ENCODE measurements at regions of chr11 and their contacts with region 1.

Region 1: DNA sequence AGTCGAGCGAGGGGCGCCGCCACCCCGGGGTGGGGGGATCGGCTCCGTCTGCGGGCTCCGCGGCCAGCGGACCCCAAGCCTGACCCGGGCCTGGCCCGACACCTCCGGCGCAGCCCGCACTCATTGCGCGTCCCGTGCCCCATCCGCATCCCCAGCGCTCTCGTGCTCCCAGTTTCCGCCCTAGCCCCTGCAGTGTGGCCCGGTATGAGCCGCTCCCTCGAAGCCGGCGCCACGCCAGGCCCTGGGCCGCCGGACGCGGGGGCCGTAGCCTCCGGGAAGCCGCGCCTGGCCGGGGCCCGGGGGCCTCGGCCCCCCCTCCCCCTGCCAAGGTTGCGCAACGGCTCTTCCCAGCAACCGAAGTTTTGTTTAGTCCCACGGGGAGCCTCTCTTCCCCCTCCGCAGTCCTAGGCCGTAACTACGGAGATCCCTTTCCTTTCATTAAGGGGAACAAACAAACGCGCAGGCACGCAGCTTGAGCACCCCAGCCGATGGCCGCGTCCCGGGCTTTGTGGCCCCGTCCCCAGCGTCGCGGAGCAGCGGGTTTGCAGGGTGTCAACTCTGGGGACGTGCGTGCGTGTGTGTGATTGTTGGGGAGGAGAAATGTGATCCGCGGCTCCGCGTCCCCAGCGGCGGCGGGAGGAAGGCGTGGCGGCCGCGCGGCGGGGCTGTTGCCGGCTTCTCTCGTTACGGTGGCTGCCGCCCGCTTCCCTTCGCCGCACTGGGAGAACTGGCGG is 883 bp downstream of the HIPK3 start:
- DNase-seq: peak; percentile 48 to 88 (median 73)
- ATAC-seq: peak; percentile 61
- H3K4me3 ChIP-seq: peak overlapping the region; percentile 72 to 98
- H3K4me3 Mint-ChIP-seq: peak overlapping the region; percentile 93
- H3K27ac ChIP-seq: peak overlapping the region; percentile 92 to 98
- H3K27ac Mint-ChIP-seq: peak overlapping the region; percentile 99
- H3K4me1 ChIP-seq: peaks cover 28% of the 10 kb centered on the region
- H3K4me1 Mint-ChIP-seq: peaks cover 46% of the 10 kb centered on the region
- H3K27me3 ChIP-seq: no peaks in the 10 kb centered on the region
- H3K27me3 Mint-ChIP-seq: no peaks in the 10 kb centered on the region
- CTCF ChIP-seq: peak; percentile 23

Region 2: GRCh38 chr11:32893343-32894148 is 364.5 kb before region 1 on chr11:
- CTCF ChIA-PET with region 1: no interaction called
- POLR2A ChIA-PET with region 1: no interaction called
- intact Hi-C with region 1: loop called (anchors 1 to 5 kb)
- DNase-seq: peak in 8 of 9 experiments; percentile 21 to 75 (median 54)
- ATAC-seq: peak; percentile 50
- H3K4me3 ChIP-seq: peak overlapping the region; percentile 79 to 87
- H3K4me3 Mint-ChIP-seq: peak overlapping the region; percentile 92
- H3K27ac ChIP-seq: peak overlapping the region; percentile 36 to 51
- H3K27ac Mint-ChIP-seq: peak overlapping the region; percentile 74
- H3K4me1 ChIP-seq: peaks cover 27% of the 10 kb centered on the region
- H3K4me1 Mint-ChIP-seq: peaks cover 33% of the 10 kb centered on the region
- H3K27me3 ChIP-seq: no peaks in the 10 kb centered on the region
- H3K27me3 Mint-ChIP-seq: no peaks in the 10 kb centered on the region
- CTCF ChIP-seq: peak; percentile 35

Region 3: DNA sequence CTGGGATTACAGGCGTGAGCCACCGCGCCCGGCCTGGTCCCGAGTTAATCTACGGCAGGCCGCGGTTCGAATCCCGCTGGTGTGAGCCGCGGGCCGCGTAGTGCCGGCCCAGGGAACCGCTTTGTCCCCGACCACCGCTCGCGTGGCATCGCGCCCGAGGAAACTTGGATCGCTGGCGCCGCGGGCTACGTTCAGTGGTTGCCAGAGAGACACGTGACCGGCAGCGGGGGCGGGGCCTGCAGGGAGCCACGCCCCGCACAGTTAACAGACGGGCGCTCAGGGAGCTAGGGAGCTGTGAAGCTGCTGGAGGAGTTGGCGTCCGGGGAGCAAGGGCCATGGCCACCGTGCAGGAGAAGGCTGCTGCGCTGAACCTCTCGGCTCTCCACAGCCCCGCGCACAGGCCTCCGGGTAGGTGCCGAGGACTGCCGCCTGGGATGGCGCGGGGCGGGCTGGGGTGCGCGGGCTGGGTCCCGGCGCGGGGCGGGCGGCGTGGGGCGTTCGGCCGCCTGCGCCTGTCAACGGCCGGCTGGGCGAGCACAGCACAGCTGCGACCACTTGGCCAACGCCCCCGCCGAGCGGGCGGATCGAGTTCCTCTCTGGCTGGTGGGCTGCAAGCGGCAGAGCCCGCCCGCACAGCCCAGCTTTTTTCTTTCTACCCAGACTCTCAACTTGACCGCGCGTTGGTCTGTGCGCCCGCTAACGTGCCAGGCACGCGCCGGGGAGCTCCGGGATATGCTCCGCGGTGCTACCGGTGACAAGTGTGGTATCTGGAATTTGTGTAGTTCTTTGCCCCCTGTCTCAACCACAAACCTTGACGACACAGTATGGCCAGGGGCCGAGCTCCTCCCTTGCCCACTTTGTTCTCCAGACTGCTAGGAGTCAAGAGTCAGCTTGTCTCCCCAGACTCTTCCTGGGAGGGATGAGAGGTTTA is 242.2 kb before region 1 on chr11 and contains the start of gene DEPDC7:
- CTCF ChIA-PET with region 1: no interaction called
- POLR2A ChIA-PET with region 1: no interaction called
- intact Hi-C with region 1: loop called in 1 of 2 experiments (anchors 5 kb)
- DNase-seq: peak; percentile 49 to 87 (median 80)
- ATAC-seq: peak; percentile 75
- H3K4me3 ChIP-seq: peak within 1 kb of the TSS; percentile 56 to 62
- H3K4me3 Mint-ChIP-seq: peak within 1 kb of the TSS; percentile 89
- H3K27ac ChIP-seq: no peak within 1 kb of the TSS
- H3K27ac Mint-ChIP-seq: peak within 1 kb of the TSS; percentile 73
- H3K4me1 ChIP-seq: peaks cover 26% of the 10 kb centered on the region
- H3K4me1 Mint-ChIP-seq: peaks cover 51% of the 10 kb centered on the region
- H3K27me3 ChIP-seq: peaks cover 0 to 2% of the 10 kb centered on the region in 2 experiments
- H3K27me3 Mint-ChIP-seq: peaks cover 12% of the 10 kb centered on the region
- CTCF ChIP-seq: no peak
- total RNA-seq, gene DEPDC7: 2.9 to 3.2 TPM

Region 4: DNA sequence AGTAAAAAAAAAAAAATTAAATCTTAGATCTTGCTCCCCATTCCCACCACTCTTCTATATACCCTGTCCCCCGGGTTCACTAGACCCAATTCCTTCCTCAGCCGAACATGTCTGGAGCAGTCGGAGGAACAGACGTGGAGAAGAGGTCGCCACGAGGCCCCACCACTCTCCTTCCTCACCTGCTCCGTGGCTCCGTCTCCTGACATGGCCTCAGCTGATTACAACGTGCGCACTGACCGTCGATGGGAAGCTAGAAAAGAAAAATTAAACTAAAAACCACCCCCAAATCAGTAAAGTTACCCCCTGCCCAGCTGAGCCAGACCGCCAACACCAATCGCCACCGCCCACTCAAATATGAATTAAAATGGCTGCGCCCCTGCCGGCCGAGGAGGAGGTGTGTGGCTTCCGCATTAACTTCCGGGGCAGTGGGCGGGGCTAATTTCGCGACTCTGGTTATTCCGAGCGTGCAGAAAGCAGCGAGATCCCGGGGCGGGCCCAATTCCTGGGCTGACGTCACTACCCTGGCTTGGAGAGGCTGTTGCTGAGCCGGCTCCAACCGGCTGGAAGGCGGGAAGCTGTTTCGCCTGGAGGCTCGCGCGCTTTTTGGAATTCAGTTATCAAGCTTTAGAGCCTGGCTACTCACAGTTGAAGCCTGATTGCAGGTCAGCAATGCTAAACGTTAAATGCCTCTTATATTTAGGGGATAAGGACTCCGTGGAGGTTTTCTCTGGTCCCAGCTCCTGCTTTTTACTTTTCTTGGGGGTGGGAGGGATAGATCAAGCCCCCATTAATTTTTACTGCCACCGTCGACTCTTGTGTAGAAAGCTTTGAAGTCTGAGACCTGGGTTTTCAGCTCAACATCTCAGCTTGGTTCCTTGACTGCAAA is 96.7 kb before region 1 on chr11 and contains the start of gene CSTF3:
- CTCF ChIA-PET with region 1: no interaction called
- POLR2A ChIA-PET with region 1: interaction called, 10 read pairs
- intact Hi-C with region 1: loop called (anchors 1 to 2 kb)
- DNase-seq: peak; percentile 85 to 98 (median 94)
- ATAC-seq: peak; percentile 94
- H3K4me3 ChIP-seq: peak within 1 kb of the TSS; percentile 73 to 79
- H3K4me3 Mint-ChIP-seq: peak within 1 kb of the TSS; percentile 99
- H3K27ac ChIP-seq: peak within 1 kb of the TSS; percentile 77 to 89
- H3K27ac Mint-ChIP-seq: peak within 1 kb of the TSS; percentile 96
- H3K4me1 ChIP-seq: peaks cover 35% of the 10 kb centered on the region
- H3K4me1 Mint-ChIP-seq: peaks cover 47% of the 10 kb centered on the region
- H3K27me3 ChIP-seq: no peaks in the 10 kb centered on the region
- H3K27me3 Mint-ChIP-seq: no peaks in the 10 kb centered on the region
- CTCF ChIP-seq: no peak
- total RNA-seq, gene CSTF3: 7.0 to 7.9 TPM

Region 5: DNA sequence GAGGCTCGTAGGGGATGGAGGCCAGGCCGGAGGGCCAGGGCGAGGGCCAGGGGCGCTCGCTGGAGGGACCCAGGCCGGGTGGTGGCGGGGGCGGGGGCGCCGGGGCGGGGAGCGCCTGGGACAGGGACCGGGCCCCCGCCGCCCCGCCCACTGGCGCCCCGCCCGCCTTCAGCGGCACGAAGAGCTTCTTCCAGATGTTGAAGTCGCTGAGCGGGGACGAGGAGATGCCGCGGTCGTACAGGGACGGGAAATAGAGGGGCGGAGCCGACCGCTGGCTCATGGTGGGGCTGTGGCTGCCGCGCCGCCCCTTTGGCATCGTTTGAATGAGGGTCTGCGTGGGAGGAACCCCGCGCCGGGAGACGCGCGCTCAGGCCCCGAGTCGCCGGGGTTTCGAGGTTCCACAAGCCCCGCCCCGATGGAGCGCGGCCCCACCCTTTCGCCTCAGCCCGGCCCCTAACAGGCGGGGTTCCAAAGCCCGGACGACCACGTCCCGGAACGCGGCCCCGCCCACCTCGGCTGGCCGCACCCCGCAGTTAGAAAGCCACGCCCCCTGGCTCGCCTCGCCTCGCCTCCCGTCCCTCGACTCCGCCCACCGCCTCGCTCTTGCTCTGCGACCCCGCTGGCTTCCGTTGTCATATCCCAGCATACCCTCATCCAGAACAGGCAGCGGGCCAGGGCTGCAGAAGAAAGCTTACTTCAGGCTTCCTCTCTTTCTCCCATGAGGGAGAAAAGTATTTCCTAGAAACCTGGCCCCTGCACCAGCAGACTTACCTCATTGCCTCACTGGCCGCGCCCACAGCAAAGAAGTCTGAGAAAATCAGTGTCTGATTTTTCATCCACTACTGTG is 442.6 kb after region 1 on chr11 and contains the start of gene C11orf91:
- CTCF ChIA-PET with region 1: no interaction called
- POLR2A ChIA-PET with region 1: no interaction called
- intact Hi-C with region 1: loop called in 1 of 2 experiments (anchors 5 kb)
- DNase-seq: peak; percentile 88 to 96 (median 94)
- ATAC-seq: peak; percentile 95
- H3K4me3 ChIP-seq: peak within 1 kb of the TSS; percentile 51 to 68
- H3K4me3 Mint-ChIP-seq: peak within 1 kb of the TSS; percentile 92
- H3K27ac ChIP-seq: no peak within 1 kb of the TSS
- H3K27ac Mint-ChIP-seq: peak within 1 kb of the TSS; percentile 64
- H3K4me1 ChIP-seq: peaks cover 13% of the 10 kb centered on the region
- H3K4me1 Mint-ChIP-seq: peaks cover 25% of the 10 kb centered on the region
- H3K27me3 ChIP-seq: no peaks in the 10 kb centered on the region
- H3K27me3 Mint-ChIP-seq: peaks cover 2% of the 10 kb centered on the region
- CTCF ChIP-seq: no peak
- total RNA-seq, gene C11orf91: 0.54 TPM in 1 of 2 experiments, not detected in the other

Region 6: GRCh38 chr11:33773987-33774735 is 516.1 kb after region 1 on chr11 and contains the start of gene FBXO3:
- CTCF ChIA-PET with region 1: no interaction called
- POLR2A ChIA-PET with region 1: no interaction called
- intact Hi-C with region 1: loop called (anchors 1 to 2 kb)
- DNase-seq: peak; percentile 73 to 93 (median 88)
- ATAC-seq: peak; percentile 89
- H3K4me3 ChIP-seq: peak within 1 kb of the TSS; percentile 91 to 96
- H3K4me3 Mint-ChIP-seq: peak within 1 kb of the TSS; percentile 98
- H3K27ac ChIP-seq: peak within 1 kb of the TSS; percentile 71 to 80
- H3K27ac Mint-ChIP-seq: peak within 1 kb of the TSS; percentile 96
- H3K4me1 ChIP-seq: peaks cover 29% of the 10 kb centered on the region
- H3K4me1 Mint-ChIP-seq: peaks cover 49% of the 10 kb centered on the region
- H3K27me3 ChIP-seq: peaks cover 2 to 10% of the 10 kb centered on the region in 2 experiments
- H3K27me3 Mint-ChIP-seq: peaks cover 8% of the 10 kb centered on the region
- CTCF ChIP-seq: no peak
- total RNA-seq, gene FBXO3: 54.8 to 55.4 TPM

Region 7: DNA sequence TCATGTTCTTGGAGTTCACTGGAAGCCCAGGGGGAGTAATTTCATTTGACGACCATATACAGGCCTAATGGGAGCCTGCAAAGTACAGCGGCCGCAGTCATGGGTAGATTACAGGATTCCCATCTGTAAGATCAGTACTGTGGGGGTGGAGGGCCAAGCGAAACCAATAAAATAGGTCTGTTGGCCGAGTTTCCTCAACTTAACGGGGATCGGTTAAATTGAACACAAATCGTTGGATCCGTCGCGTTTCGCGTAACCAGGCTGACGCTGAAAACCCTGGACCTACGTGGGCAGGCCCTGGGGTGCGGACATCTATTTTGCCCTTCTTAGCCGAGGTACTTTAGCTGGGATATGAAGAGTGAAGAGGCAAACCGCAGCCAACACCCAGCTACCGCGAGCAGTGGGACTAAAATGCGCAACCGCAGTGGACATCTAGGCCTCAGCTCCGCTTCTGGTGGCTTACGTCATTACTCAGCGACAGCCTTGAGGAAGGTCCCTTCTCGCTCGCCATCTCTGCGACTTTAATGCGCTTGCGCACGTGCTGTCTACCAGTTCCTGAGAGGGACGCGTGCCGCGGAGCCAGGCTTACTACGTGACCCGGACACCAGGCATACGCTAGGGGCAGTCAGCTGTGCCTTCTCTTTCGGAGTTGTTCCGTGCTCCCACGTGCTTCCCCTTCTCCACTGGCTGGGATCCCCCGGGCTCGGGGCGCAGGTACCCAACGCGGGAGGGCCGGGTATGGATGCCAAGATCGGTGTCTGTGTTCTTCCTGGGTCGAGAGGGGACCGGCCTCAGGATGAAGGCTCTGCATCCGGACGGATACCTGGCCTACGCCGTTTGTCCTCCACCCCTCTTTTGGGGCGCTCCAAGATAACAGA is 847.3 kb after region 1 on chr11 and contains the start of gene NAT10:
- CTCF ChIA-PET with region 1: no interaction called
- POLR2A ChIA-PET with region 1: no interaction called
- intact Hi-C with region 1: loop called in 1 of 2 experiments (anchors 10 kb)
- DNase-seq: peak; percentile 93 to 100 (median 98)
- ATAC-seq: peak; percentile 93
- H3K4me3 ChIP-seq: peak within 1 kb of the TSS; percentile 70 to 94
- H3K4me3 Mint-ChIP-seq: peak within 1 kb of the TSS; percentile 97
- H3K27ac ChIP-seq: peak within 1 kb of the TSS; percentile 81 to 90
- H3K27ac Mint-ChIP-seq: peak within 1 kb of the TSS; percentile 99
- H3K4me1 ChIP-seq: peaks cover 27% of the 10 kb centered on the region
- H3K4me1 Mint-ChIP-seq: peaks cover 60% of the 10 kb centered on the region
- H3K27me3 ChIP-seq: no peaks in the 10 kb centered on the region
- H3K27me3 Mint-ChIP-seq: no peaks in the 10 kb centered on the region
- CTCF ChIP-seq: no peak
- total RNA-seq, gene NAT10: 51.1 to 59.6 TPM

Measured in CD8-positive, alpha-beta T cell (primary cell).